ENCODE measurements at regions of chr22 and their contacts with region 1.

Region 1: DNA sequence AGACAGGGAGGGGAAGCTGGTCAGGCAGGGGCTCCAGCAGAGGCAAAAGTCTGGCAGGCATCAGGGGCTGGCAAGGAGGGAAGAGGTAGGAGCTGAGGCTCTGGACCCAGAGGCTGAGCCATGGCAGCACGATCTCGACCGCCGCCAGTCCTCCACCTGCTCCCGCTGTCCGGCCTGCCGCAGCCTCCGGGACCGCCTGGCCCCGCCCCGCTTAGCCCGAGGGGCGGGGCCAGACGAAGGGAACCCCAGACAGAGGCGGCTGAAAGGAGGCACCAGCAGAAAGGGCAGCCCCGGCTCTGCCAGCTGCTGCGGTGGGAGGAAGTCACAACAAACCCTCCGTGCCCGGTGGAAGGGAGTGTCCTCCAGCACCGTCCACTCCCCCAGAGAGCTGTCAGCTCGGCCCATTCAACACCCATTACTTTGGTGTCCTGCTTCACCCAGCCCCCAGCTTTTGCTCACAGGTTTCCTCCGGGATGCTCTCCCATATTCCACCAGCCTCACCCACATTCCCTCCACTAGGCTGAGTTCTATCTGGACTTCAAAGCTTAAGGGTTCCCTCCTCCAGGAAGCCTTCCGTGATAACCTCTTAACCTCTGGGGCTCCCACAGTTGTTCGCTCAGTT is at the start of gene MFNG:
- DNase-seq: peak; percentile 56 to 72
- H3K4me3 ChIP-seq: peak within 1 kb of the TSS; percentile 4; the same call in 1 of the 2 replicates
- H3K4me3 Mint-ChIP-seq: peak within 1 kb of the TSS; percentile 48
- H3K27ac Mint-ChIP-seq: peak within 1 kb of the TSS; percentile 85
- H3K4me1 ChIP-seq: peaks cover 14% of the 10 kb centered on the region
- H3K4me1 Mint-ChIP-seq: peaks cover 19% of the 10 kb centered on the region
- H3K27me3 ChIP-seq: no peaks in the 10 kb centered on the region
- H3K27me3 Mint-ChIP-seq: no peaks in the 10 kb centered on the region
- CTCF ChIP-seq: no peak
- total RNA-seq, gene MFNG: 3.6 TPM in 2 replicates

Region 2: GRCh38 chr22:37254209-37254866 is 232.0 kb before region 1 on chr22:
- CTCF ChIA-PET with region 1: no interaction called
- POLR2A ChIA-PET with region 1: interaction called, 10 read pairs
- intact Hi-C with region 1: no loop called
- DNase-seq: no peak
- H3K4me3 ChIP-seq: no peak overlapping the region
- H3K4me3 Mint-ChIP-seq: no peak overlapping the region
- H3K27ac Mint-ChIP-seq: no peak overlapping the region
- H3K4me1 ChIP-seq: no peaks in the 10 kb centered on the region
- H3K4me1 Mint-ChIP-seq: no peaks in the 10 kb centered on the region
- H3K27me3 ChIP-seq: no peaks in the 10 kb centered on the region
- H3K27me3 Mint-ChIP-seq: peaks cover 5% of the 10 kb centered on the region
- CTCF ChIP-seq: no peak

Region 3: GRCh38 chr22:37472418-37473006 is 13.8 kb before region 1 on chr22:
- CTCF ChIA-PET with region 1: interaction called, 15 read pairs
- POLR2A ChIA-PET with region 1: no interaction called
- intact Hi-C with region 1: no loop called
- DNase-seq: peak; percentile 61 to 69
- H3K4me3 ChIP-seq: no peak overlapping the region
- H3K4me3 Mint-ChIP-seq: no peak overlapping the region
- H3K27ac Mint-ChIP-seq: no peak overlapping the region
- H3K4me1 ChIP-seq: no peaks in the 10 kb centered on the region
- H3K4me1 Mint-ChIP-seq: no peaks in the 10 kb centered on the region
- H3K27me3 ChIP-seq: no peaks in the 10 kb centered on the region
- H3K27me3 Mint-ChIP-seq: no peaks in the 10 kb centered on the region
- CTCF ChIP-seq: peak; percentile 61 to 66

Region 4: DNA sequence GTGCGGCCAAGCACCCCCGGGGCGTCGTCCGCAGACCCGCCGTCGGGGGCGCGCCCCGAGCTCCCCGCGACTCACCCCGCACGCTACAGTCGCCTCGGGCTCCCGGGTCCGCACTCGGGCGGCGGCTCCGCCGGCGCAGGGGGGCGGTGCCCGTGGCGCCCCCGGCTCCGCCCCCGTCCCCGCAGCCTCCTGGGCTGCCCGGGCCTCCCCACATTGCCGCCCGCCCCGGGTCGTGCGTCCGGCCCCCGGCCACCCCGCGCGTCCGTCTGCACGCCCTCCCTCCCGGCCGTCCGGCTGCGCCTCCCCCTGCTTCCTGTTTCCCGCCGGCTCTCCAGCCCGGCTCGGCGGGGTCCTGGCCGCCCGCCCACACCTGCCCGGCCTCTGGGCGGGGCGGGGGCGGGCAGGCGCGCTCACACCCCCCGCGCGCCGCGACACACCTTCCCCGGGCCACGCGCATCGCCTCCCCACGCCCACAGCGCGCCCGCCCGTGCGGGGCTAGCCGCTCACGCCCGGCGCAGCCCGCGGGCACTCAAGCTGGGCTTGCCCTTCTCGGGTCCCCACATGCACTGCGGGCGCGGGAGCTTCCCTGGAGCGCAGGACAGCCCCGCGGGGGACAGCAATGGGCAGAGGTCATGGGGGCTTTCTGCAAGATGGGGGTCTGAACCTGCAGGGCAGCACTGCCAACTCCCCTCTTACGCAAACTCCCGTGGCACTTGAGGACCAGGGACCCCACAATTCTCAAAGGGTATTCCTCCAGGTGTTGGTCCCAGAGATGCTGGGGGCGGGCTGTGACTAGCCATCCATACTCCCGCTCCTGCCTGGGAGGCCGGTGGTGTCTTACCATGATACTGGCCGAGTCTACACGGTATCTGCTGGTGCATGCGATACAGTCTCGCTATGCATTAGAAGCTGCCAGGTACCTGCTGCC is 33.2 kb after region 1 on chr22 and contains the start of gene CARD10:
- CTCF ChIA-PET with region 1: no interaction called
- POLR2A ChIA-PET with region 1: no interaction called
- intact Hi-C with region 1: no loop called
- DNase-seq: peak in 1 of 2 experiments; percentile 63
- H3K4me3 ChIP-seq: peak within 1 kb of the TSS; percentile 63
- H3K4me3 Mint-ChIP-seq: peak within 1 kb of the TSS; percentile 86
- H3K27ac Mint-ChIP-seq: peak within 1 kb of the TSS; percentile 69
- H3K4me1 ChIP-seq: peaks cover 12% of the 10 kb centered on the region; the same call in 1 of the 2 replicates
- H3K4me1 Mint-ChIP-seq: peaks cover 14% of the 10 kb centered on the region
- H3K27me3 ChIP-seq: no peaks in the 10 kb centered on the region
- H3K27me3 Mint-ChIP-seq: no peaks in the 10 kb centered on the region
- CTCF ChIP-seq: no peak
- total RNA-seq, gene CARD10: 26.5 and 31.7 TPM in 2 replicates

Region 5: DNA sequence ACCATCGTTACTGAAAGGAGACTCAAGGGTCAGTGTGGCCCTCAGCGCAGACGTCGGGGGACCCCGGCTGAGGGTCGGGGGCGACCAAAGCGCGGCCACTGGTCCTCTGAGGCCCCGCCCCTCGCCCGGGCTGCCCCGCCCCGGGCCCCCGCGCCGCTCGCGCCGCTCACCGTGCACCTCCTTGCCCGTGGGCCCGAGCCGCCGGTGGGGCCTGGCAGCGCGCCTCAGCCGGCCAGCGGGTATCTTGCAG is 357.3 kb after region 1 on chr22:
- CTCF ChIA-PET with region 1: no interaction called
- POLR2A ChIA-PET with region 1: no interaction called
- intact Hi-C with region 1: no loop called
- DNase-seq: no peak
- H3K4me3 ChIP-seq: peak overlapping the region; percentile 75
- H3K4me3 Mint-ChIP-seq: peak overlapping the region; percentile 79
- H3K27ac Mint-ChIP-seq: peak overlapping the region; percentile 53
- H3K4me1 ChIP-seq: peaks cover 9% of the 10 kb centered on the region; the same call in 1 of the 2 replicates
- H3K4me1 Mint-ChIP-seq: peaks cover 7% of the 10 kb centered on the region
- H3K27me3 ChIP-seq: no peaks in the 10 kb centered on the region
- H3K27me3 Mint-ChIP-seq: no peaks in the 10 kb centered on the region
- CTCF ChIP-seq: no peak

Measured in Caco-2 (cell line).